Activated CD4-positive, alpha-beta T cell treated with anti-CD3 and anti-CD28 coated beads, Interleukin-2, amount 10 ng/mL, durations not matched to agents 24 days and 14 days (primary cell): ENCODE measurements at regions of chr11 and their contacts with region 1.

Region 1: DNA sequence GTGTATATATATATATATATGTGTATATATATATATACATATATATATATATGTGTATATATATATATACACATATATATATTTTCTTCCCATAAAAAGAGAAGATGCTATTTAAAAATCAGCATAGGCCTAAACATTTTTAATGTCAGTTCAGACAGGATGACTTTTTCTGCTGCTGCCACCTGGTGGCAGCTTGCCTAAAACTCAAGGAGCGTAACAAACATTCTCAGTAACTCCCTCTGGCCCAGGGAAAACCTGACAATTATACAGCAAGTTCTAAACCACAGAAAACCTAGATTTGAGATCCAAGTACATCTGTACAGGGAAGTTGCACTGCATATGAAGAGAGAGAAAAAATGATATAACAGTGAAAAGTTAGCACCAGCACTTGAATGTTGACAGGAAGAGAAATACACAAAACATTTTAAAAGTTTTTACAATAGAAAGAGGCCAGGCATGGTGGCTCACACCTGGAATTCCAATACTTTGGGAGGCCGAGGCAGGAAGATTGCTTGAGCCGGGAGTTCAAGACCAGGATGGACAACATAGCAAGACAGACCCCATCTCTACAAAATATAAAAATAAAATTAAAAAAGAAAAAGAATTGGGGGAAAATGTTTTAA is 16.6 kb downstream of the OR8A1 start:
- DNase-seq: peak; percentile 81
- H3K4me3 Mint-ChIP-seq: no peak overlapping the region
- H3K27ac Mint-ChIP-seq: no peak overlapping the region
- H3K4me1 Mint-ChIP-seq: no peaks in the 10 kb centered on the region
- H3K27me3 Mint-ChIP-seq: peaks cover 8% of the 10 kb centered on the region

Region 2: DNA sequence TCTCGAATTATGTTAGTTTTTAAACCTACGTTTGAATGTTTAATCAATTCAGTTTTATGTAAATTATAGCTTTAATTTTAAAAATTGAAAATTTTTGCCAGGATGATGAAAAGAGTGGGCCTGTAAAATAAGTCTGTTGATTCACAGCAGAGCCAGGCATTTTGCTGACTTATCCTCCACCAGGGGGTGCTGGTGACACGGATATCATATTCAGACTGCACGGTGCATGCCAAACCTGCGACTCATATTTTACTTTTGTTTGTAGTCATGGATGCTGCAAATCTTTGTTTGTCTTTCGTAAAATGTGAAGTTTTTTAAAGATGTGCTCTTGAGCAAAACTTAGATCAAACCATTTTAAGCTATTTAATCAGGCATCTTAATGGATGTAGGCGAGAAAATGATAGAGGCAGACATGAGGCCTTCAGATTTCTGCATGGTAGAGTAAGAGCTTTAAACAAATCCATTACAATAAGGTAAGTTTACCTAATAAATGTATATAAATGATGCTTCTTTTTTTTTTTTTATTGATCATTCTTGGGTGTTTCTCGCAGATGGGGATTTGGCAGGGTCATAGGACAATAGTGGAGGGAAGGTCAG is 183.9 kb before region 1 on chr11:
- intact Hi-C with region 1: loop called (anchors 2 kb)
- DNase-seq: peak; percentile 86
- H3K4me3 Mint-ChIP-seq: no peak overlapping the region
- H3K27ac Mint-ChIP-seq: no peak overlapping the region
- H3K4me1 Mint-ChIP-seq: peaks cover 2% of the 10 kb centered on the region
- H3K27me3 Mint-ChIP-seq: no peaks in the 10 kb centered on the region

Region 3: DNA sequence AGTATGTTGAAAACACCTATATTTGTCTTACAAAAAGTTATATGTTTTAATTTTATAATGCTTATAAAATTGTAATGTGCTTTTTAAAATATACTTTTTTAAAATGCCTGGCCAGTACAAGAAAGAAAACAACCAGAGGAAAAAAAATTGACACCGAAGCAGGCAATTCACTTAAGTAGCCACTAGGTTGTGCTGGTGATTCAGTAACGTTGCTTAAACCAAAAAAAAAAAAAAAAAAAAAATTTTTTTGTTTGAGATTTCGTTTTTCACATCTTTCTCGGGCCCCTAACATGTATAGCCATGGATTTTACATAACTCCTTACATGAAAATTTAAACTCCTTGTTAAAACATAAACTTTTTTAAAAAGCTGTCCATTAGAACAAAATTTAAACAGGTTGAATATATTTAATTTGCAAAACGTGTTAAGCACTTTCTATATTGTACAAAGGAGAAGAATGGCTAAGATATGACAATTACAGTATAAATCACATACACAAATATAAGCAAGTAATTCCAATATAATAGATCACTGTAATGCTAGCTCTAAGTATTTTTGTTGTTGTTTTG is 170.9 kb before region 1 on chr11:
- intact Hi-C with region 1: loop called (anchors 1 kb)
- DNase-seq: peak; percentile 61
- H3K4me3 Mint-ChIP-seq: no peak overlapping the region
- H3K27ac Mint-ChIP-seq: no peak overlapping the region
- H3K4me1 Mint-ChIP-seq: no peaks in the 10 kb centered on the region
- H3K27me3 Mint-ChIP-seq: peaks cover 3% of the 10 kb centered on the region

Region 4: DNA sequence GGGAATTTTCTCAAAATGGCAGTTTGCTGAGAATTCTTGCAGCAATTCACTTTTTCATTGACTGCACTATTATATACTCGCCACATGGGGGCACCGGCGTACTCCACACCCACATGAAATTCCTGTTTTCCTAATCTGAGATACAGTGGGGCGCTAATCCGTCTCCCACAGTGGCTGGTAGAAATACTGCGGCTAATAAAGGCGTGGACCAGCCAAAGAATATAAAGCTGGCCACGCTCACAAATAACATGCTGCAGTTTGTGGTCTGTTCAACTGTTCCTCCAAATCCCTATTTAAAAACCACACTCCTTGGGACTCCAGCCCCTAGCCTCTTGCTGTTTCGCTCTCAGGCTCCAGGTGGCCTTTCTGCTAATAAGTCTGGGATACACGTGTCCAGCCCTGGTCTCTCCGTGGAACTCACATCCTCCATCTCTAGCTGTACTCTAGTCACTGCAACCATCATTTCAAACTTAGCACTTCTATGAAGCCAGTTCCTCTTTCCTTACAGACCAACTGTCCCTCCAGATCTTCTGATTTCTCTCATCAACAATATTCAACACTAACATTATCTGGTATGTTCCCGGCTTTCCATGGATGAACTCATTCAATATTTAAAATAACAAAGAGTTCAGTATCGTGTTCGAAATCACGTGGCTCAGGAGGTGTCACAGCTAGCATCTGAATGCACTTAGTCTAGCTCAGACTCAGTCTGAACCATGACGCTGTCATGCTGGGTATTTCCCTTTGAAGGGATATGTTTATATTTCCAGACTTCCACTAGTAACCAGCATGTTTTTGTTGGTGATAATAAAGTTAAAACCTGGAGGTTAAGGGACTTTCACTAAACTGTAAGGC is 58.3 kb after region 1 on chr11:
- intact Hi-C with region 1: no loop called
- DNase-seq: peak; percentile 68
- H3K4me3 Mint-ChIP-seq: no peak overlapping the region
- H3K27ac Mint-ChIP-seq: no peak overlapping the region
- H3K4me1 Mint-ChIP-seq: no peaks in the 10 kb centered on the region
- H3K27me3 Mint-ChIP-seq: no peaks in the 10 kb centered on the region